Activated B cell treated with CpG ODN at 0.5 μM for 24 hours (primary cell): ENCODE measurements at regions of chr3 and their contacts with region 1.

Region 1: DNA sequence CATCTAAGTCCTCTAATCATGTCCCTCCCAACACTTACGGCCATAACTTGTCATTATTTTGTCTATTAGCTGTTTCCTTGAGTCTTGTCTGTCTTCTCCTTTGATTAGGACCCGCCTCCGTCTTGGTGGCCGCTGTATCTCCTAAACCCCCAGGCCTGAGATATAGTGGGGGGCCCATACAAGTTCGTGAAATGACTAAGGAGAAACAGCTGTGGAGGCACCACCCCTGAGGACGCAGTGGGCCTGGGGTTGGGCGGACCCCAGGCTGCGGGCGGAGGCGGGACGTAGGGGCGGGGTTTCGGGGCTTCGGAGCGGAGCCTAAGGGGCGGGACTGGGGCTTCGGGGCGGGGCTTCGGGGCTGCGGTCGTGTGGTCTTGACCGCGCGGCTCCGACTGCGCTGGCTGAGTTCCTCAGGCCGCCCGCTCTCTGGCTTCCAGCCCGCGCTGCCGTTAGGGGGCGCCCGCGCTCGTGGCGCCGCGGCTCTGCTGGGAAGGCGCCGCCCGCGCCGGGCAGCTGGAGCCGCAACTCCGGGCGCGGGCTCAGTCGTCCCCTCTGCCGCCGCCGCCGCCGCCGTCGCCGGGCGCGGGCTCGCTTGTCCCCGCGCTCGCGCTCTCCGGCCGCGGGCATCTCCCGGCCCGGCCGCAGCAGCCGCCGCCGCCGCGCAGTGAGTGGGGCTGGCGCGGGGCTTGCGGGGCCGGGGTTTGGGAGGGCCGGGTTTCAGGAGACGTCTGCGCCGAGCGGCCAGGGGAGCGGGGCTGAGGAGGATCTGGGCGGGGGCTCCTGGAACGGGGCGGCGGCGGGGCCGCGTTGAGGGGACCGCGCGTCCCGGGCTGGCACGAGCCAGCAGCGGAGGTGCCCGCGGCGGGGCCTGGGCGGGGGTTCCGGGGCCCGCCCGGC is at the start of gene KCTD6:
- DNase-seq: peak; percentile 95
- ATAC-seq: peak; percentile 94
- H3K4me3 Mint-ChIP-seq: peak within 1 kb of the TSS; percentile 88
- H3K27ac Mint-ChIP-seq: peak within 1 kb of the TSS; percentile 74
- H3K4me1 Mint-ChIP-seq: peaks cover 46% of the 10 kb centered on the region
- H3K27me3 Mint-ChIP-seq: peaks cover 5% of the 10 kb centered on the region
- CTCF ChIP-seq: no peak
- total RNA-seq, gene KCTD6: 8.8 and 10.0 TPM in 2 replicates

Region 2: GRCh38 chr3:58324391-58325390 is 167.1 kb before region 1 on chr3:
- CTCF ChIA-PET with region 1: interaction called, 3 read pairs
- POLR2A ChIA-PET with region 1: interaction called, 4 read pairs
- intact Hi-C with region 1: loop called (anchors 2 kb)
- DNase-seq: no peak
- ATAC-seq: peak; percentile 47
- H3K4me3 Mint-ChIP-seq: peak overlapping the region; percentile 48
- H3K27ac Mint-ChIP-seq: peak overlapping the region; percentile 73
- H3K4me1 Mint-ChIP-seq: peaks cover 38% of the 10 kb centered on the region
- H3K27me3 Mint-ChIP-seq: no peaks in the 10 kb centered on the region
- CTCF ChIP-seq: no peak

Region 3: DNA sequence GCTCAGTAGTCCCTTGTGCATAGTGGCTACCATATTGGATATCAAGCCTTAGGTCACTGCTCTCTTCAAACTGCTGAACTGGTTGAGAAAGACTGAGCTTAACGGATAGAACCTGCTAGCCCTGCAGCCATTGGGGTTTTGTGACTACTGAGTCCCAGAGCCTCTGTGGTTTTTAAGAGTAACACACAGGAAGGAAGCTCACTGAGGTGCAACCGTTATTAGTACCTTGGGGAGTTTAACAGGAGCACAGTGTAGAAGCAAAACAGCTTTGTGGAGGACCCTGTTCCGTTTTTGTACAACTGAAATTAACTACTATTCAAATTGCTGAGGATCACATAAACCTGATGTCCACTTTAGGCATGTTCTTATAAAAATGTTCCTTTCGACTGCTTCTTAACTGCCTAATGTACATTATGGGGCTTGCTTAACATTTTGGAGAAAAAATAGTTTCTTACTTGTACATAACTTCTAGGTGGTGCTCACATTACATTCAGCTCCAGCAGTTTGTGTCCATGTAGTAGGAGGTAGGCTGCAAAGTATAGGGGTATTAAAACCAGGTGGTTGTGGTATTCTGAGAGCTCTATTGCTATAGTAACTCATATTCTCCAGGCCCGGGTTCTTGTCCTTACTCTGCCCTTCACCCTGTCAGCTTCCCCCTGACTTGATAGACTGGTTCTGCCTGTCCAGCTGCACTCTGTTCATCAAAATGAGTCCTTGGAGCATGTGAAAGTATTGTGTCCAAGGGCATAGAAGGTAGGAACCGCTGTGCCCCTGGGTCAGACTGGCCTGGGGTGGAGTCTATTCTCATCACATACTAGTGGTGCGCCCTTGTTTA is 141.7 kb before region 1 on chr3:
- CTCF ChIA-PET with region 1: interaction called, 10 read pairs
- POLR2A ChIA-PET with region 1: interaction called, 3 read pairs
- intact Hi-C with region 1: no loop called
- DNase-seq: no peak
- ATAC-seq: peak; percentile 83
- H3K4me3 Mint-ChIP-seq: peak overlapping the region; percentile 71
- H3K27ac Mint-ChIP-seq: peak overlapping the region; percentile 100
- H3K4me1 Mint-ChIP-seq: peaks cover 96% of the 10 kb centered on the region
- H3K27me3 Mint-ChIP-seq: no peaks in the 10 kb centered on the region
- CTCF ChIP-seq: no peak

Region 4: DNA sequence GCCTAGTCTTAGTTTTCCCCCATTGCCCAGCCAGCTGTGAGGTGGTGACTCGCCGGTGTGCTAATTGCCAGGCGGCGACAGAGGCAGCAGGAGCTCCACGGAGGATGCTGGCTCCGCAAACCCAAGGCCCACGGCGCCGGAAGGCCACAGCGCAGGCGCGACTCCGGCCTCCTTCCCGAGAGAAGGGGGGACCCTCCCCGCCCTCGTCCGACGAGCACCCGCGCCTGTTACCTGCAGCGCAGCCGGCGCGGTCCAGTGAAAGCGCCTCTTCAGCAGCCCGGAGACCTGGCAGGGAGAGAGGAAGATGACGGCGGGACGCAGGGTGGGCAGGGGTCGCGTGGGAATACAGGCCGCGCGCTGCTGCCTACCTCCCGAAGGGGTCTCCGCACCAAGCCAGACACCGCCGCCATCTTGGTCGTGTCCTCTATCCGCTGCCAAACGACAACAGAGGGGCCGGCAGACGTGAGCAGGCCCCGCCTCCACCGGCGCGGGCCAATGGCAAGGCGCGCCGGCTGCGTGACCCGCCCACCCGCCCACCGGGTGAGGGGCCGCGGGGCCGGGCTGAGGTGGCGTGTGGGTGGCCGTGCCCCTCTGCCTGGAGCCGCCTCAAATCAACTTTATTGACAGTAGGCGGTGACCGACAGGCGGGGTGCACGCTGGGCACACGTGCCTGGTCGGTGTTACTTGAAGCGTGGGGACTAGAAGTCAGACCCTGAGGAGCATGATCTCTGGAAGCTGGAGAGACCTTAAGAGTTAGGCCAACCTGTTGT is 58.2 kb before region 1 on chr3 and contains the start of gene PDHB:
- CTCF ChIA-PET with region 1: interaction called, 3 read pairs
- POLR2A ChIA-PET with region 1: interaction called, 12 read pairs
- intact Hi-C with region 1: loop called (anchors 1 kb)
- DNase-seq: peak; percentile 86
- ATAC-seq: peak; percentile 95
- H3K4me3 Mint-ChIP-seq: peak within 1 kb of the TSS; percentile 95
- H3K27ac Mint-ChIP-seq: peak within 1 kb of the TSS; percentile 95
- H3K4me1 Mint-ChIP-seq: peaks cover 27% of the 10 kb centered on the region
- H3K27me3 Mint-ChIP-seq: no peaks in the 10 kb centered on the region
- CTCF ChIP-seq: no peak
- total RNA-seq, gene PDHB: 63.0 and 67.3 TPM in 2 replicates

Region 5: DNA sequence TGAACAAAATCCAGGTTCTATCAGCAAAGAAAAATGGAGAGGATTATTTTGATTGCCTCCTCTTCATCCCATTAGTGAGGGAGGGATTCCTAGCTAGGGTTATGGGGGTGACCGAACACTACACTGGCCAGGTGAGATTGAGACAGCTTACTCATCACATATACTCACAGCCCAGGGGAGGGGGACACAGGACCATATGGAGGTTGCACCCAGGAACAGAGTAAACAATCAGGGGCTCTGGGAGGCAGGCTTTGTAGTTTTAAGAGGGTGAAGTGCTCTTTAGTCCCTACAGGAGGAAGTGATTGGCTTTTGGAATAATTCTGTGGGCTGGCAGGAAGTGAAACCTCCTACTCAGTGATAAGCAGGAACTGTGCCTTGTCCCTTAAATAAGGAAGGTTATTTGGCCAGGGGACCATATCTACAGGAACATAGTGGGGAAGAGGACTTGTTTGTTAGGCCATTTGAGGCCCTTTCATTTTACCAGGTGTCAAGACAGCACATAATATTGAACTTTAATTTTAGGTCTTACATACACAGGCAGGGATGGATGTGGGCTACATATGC is 17.3 kb before region 1 on chr3:
- CTCF ChIA-PET with region 1: interaction called, 5 read pairs
- POLR2A ChIA-PET with region 1: interaction called, 4 read pairs
- intact Hi-C with region 1: loop called (anchors 2 kb)
- DNase-seq: no peak
- ATAC-seq: peak; percentile 65
- H3K4me3 Mint-ChIP-seq: peak overlapping the region; percentile 44
- H3K27ac Mint-ChIP-seq: peak overlapping the region; percentile 76
- H3K4me1 Mint-ChIP-seq: peaks cover 23% of the 10 kb centered on the region
- H3K27me3 Mint-ChIP-seq: no peaks in the 10 kb centered on the region
- CTCF ChIP-seq: no peak

Region 6: GRCh38 chr3:59049671-59050331 is 558.0 kb after region 1 on chr3 and contains the start of gene CFAP20DC:
- CTCF ChIA-PET with region 1: no interaction called
- POLR2A ChIA-PET with region 1: no interaction called
- intact Hi-C with region 1: loop called (anchors 5 kb)
- DNase-seq: peak; percentile 85
- ATAC-seq: peak; percentile 96
- H3K4me3 Mint-ChIP-seq: peak within 1 kb of the TSS; percentile 81
- H3K27ac Mint-ChIP-seq: peak within 1 kb of the TSS; percentile 61
- H3K4me1 Mint-ChIP-seq: peaks cover 7% of the 10 kb centered on the region
- H3K27me3 Mint-ChIP-seq: no peaks in the 10 kb centered on the region
- CTCF ChIP-seq: no peak
- total RNA-seq, gene CFAP20DC: 1.0 and 1.6 TPM in 2 replicates